Natural killer cell (primary cell): ENCODE measurements at regions of chr3 and their contacts with region 1.

Region 1: DNA sequence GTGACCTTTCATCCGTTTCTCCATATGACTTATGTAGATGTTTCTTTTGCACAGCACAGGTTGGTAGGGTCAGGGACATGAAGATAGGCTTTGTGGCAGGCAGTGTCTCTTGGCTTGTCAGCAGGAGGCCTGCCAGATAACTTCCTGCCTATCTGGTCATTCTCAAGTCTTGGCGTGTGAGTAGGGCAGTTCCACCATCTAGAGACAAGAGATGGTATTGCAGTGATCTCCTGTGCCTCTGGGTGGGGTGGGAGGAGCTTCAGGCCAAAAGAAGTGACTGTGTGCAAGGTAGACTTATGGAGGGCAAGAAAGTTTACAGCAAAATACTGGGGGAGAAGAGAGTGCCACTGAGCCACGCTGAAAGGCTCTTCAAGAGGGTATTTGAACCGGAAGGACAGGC is 11.0 kb downstream of the TEX264 start:
- DNase-seq: peak; percentile 64 to 93
- ATAC-seq: peak; percentile 77 to 89 (median 85)
- H3K4me3 ChIP-seq: no peak overlapping the region
- H3K4me3 Mint-ChIP-seq: peak overlapping the region; percentile 86
- H3K27ac ChIP-seq: peak overlapping the region; percentile 57
- H3K27ac Mint-ChIP-seq: peak overlapping the region; percentile 81
- H3K4me1 ChIP-seq: peaks cover 94% of the 10 kb centered on the region
- H3K4me1 Mint-ChIP-seq: peaks cover 69 to 88% of the 10 kb centered on the region in 2 donors
- H3K27me3 ChIP-seq: no peaks in the 10 kb centered on the region
- H3K27me3 Mint-ChIP-seq: no peaks in the 10 kb centered on the region
- CTCF ChIP-seq: peak; percentile 85

Region 2: DNA sequence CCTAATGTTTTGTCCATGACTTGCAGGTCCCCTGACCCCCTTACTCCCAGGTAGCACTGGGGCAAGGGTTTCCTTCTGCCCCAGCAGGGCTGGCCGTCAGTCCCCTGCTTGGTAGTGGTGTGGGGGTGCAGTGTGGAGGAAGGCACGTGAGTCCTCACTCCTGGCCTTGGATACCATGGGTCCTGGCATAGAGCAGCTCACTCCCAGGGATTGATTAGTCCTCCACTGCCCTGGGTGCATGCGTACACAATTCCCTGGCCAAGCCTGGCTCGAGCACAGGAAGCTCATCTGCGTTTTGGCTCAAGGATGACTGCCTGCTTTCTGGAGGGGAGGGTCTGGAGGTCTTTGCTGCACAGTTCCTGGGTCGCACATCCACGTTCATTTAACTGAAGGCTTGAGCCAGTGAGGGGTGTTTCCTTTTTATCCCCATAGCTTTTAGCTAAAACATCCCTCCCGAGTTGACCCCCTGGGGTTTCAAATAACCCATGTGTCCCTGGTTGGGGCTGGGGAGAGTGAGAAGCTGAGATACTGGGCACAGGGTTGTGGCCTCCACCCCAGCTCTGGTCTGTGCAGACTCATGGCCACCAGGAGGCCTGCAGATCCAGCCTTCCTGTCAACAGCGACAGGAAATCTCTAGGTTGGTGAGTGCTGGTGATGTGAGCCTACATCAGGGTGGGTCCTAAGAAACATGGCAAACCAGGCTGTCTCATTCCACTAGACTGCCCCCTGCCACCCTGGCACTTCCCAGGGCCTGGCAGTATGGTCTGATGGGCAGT is 1101.2 kb before region 1 on chr3:
- intact Hi-C with region 1: no loop called
- DNase-seq: peak in 1 of 2 donors; percentile 44
- ATAC-seq: peak in 1 of 3 donors; percentile 30
- H3K4me3 ChIP-seq: no peak overlapping the region
- H3K4me3 Mint-ChIP-seq: no peak overlapping the region
- H3K27ac ChIP-seq: no peak overlapping the region
- H3K27ac Mint-ChIP-seq: no peak overlapping the region
- H3K4me1 ChIP-seq: peaks cover 28% of the 10 kb centered on the region
- H3K4me1 Mint-ChIP-seq: peaks cover 11 to 23% of the 10 kb centered on the region in 2 donors
- H3K27me3 ChIP-seq: no peaks in the 10 kb centered on the region
- H3K27me3 Mint-ChIP-seq: no peaks in the 10 kb centered on the region
- CTCF ChIP-seq: no peak

Region 3: DNA sequence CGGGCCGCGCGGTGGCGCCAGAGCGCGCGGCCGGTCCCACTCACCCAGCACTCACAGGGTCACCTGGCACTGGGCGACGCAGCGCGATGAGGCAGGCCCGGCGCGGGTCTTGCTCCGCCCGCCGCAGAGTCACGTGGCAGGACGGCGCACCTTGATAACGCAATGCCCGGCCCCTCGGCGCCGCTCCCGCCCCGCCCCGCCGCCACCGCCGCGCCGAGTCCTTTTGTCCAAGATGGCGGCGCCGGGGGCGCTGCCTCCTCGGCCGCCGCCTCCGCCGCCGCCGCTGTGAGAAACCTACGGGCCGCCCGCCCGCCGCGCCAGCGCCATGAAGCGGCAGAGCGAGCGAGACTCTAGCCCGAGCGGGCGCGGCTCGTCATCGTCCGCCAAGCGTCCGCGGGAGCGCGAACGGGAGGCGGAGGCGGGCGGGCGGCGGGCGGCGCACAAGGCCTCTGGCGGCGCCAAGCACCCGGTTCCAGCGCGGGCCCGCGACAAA is 291.0 kb before region 1 on chr3 and contains the start of gene RBM15B:
- intact Hi-C with region 1: loop called (anchors 2 kb)
- DNase-seq: peak; percentile 97 to 98
- ATAC-seq: peak; percentile 93 to 99 (median 94)
- H3K4me3 ChIP-seq: peak within 1 kb of the TSS; percentile 47
- H3K4me3 Mint-ChIP-seq: peak within 1 kb of the TSS; percentile 81
- H3K27ac ChIP-seq: peak within 1 kb of the TSS; percentile 77
- H3K27ac Mint-ChIP-seq: peak within 1 kb of the TSS; percentile 81 to 82
- H3K4me1 ChIP-seq: peaks cover 64% of the 10 kb centered on the region
- H3K4me1 Mint-ChIP-seq: peaks cover 40 to 51% of the 10 kb centered on the region in 2 donors
- H3K27me3 ChIP-seq: no peaks in the 10 kb centered on the region
- H3K27me3 Mint-ChIP-seq: no peaks in the 10 kb centered on the region
- CTCF ChIP-seq: peak; percentile 82
- total RNA-seq, gene RBM15B: 23.7 to 29.0 (median 28.6) TPM

Region 4: DNA sequence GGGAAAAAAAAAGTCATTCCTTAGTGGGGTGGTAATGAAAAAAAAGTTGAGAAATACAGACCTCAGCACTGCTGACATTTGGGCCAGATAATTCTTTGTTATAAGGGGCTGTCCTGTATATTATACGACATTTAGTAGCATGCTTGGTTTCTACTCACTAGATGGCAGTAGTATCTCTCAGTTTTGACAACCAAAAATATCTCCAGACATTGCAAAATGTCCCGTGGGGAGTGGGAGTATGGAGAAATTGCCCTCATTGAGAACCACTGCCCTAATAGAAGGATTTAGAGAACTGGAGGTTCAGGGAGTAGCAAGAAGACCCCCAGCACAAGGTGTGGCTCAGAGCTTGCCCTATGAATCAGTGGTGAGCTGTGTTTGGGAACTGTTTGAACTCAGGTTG is 39.6 kb before region 1 on chr3:
- intact Hi-C with region 1: loop called (anchors 1 kb)
- DNase-seq: peak in 1 of 2 donors; percentile 43
- ATAC-seq: no peak
- H3K4me3 ChIP-seq: no peak overlapping the region
- H3K4me3 Mint-ChIP-seq: no peak overlapping the region
- H3K27ac ChIP-seq: no peak overlapping the region
- H3K27ac Mint-ChIP-seq: peak overlapping the region in 1 of 2 donors; percentile 42
- H3K4me1 ChIP-seq: no peaks in the 10 kb centered on the region
- H3K4me1 Mint-ChIP-seq: no peaks in the 10 kb centered on the region
- H3K27me3 ChIP-seq: no peaks in the 10 kb centered on the region
- H3K27me3 Mint-ChIP-seq: no peaks in the 10 kb centered on the region
- CTCF ChIP-seq: peak; percentile 26

Region 5: DNA sequence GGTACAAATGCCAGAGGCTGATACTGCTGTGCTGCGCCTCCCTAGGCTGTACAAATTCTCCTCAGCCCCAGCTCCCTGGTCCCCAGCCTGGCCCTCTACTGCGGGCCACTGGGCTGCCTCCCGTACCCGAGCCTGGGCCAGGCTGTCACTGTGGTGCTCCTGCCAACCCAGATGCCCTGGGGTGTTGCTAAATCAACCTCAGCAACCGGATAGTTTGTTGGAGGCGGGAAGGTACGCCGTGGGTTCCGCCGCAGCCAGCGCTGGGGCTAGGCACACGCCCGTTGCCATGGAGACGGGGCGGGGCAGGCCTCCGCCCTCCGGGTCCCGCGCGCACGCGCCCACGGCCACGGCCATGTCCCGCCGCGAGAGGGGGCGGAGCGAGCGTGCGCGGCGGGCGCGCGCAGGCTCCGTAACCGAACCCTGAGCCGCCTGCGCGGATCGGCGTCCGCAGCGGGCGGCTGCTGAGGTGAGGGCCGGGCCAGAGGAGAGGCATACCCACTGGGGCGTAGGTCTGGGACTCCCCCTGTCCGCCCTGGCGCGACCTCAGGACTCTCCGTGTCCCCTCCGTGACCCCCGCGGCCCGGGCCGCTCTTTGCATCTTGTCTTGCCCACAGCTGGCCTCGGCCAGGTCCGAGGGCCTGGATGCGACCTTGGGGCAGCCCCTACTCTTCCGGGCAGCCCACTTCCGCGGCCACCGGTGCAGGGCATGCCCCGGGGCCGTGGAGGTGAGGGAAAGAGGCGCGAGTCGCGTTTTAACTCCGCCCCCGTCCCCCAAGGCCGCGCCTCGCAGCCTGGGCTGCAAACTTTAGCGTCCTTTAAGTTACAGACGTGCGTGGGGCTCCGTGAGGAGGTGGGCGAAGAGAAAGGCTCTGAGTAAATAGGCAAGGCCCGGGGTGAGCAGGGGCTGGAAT is 11.0 kb before region 1 on chr3 and contains the start of gene TEX264:
- intact Hi-C with region 1: loop called (anchors 1 kb)
- DNase-seq: peak; percentile 86 to 100
- ATAC-seq: peak; percentile 69 to 89 (median 78)
- H3K4me3 ChIP-seq: peak within 1 kb of the TSS; percentile 86
- H3K4me3 Mint-ChIP-seq: peak within 1 kb of the TSS; percentile 92
- H3K27ac ChIP-seq: peak within 1 kb of the TSS; percentile 85
- H3K27ac Mint-ChIP-seq: peak within 1 kb of the TSS; percentile 87 to 98
- H3K4me1 ChIP-seq: peaks cover 58% of the 10 kb centered on the region
- H3K4me1 Mint-ChIP-seq: peaks cover 57 to 62% of the 10 kb centered on the region in 2 donors
- H3K27me3 ChIP-seq: no peaks in the 10 kb centered on the region
- H3K27me3 Mint-ChIP-seq: no peaks in the 10 kb centered on the region
- CTCF ChIP-seq: no peak
- total RNA-seq, gene TEX264: 41.1 to 46.8 (median 45.4) TPM